ENCODE measurements at regions of chr20 and their contacts with region 1.

Region 1: GRCh38 chr20:63537525-63538203 is 488 bp upstream of the PTK6 start:
- DNase-seq: peak; percentile 99
- H3K4me3 Mint-ChIP-seq: peak overlapping the region; percentile 73
- H3K27ac Mint-ChIP-seq: peak overlapping the region; percentile 92
- H3K4me1 Mint-ChIP-seq: peaks cover 14% of the 10 kb centered on the region
- H3K27me3 Mint-ChIP-seq: no peaks in the 10 kb centered on the region
- CTCF ChIP-seq: peak; percentile 95

Region 2: GRCh38 chr20:63495741-63496595 is 41.7 kb before region 1 on chr20:
- CTCF ChIA-PET with region 1: interaction called, 10 read pairs
- POLR2A ChIA-PET with region 1: interaction called, 4 read pairs
- intact Hi-C with region 1: no loop called
- DNase-seq: peak; percentile 67
- H3K4me3 Mint-ChIP-seq: peak overlapping the region; percentile 23
- H3K27ac Mint-ChIP-seq: no peak overlapping the region
- H3K4me1 Mint-ChIP-seq: no peaks in the 10 kb centered on the region
- H3K27me3 Mint-ChIP-seq: no peaks in the 10 kb centered on the region
- CTCF ChIP-seq: peak; percentile 90

Region 3: GRCh38 chr20:63641792-63642544 is 104.3 kb after region 1 on chr20:
- CTCF ChIA-PET with region 1: interaction called, 4 read pairs
- POLR2A ChIA-PET with region 1: interaction called, 7 read pairs
- intact Hi-C with region 1: loop called (anchors 10 kb)
- DNase-seq: peak; percentile 82
- H3K4me3 Mint-ChIP-seq: peak overlapping the region; percentile 74
- H3K27ac Mint-ChIP-seq: no peak overlapping the region
- H3K4me1 Mint-ChIP-seq: peaks cover 6% of the 10 kb centered on the region
- H3K27me3 Mint-ChIP-seq: no peaks in the 10 kb centered on the region
- CTCF ChIP-seq: peak; percentile 39

Region 4: DNA sequence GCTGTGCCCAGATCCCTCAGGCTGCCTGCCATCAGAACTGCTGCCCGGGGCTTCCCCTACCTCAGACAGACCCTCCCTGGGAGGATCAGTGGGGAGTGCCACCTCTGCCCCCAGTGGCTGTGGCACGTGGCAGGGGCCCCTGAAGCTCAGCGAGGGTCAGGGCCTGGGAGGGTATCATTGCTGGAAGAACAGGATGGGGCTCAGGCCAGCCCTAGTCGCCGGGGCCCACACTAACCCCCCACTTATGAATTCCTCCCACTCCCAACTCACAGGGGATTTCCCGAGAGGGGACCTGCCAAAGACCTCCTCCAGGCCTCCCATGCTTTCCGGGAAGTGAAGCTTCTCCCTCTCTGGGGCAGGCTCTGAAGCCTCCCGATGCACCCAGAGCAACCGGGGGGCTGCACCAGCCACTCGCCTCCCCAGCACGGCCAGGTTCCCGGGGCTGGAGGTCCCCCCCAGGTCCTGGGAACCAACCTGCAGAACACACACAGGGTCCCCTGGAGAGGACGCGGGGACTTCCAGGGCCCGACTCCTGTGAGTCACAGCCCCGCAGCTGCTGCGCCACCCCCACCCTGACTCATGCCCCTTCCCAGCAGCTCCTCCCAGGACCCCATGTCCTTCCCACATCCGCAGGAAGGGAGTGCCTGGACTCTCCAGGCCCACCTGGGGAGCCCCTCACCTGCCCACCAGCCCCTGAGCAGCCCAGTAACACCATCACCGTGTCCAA is 161.2 kb after region 1 on chr20:
- CTCF ChIA-PET with region 1: interaction called, 6 read pairs
- POLR2A ChIA-PET with region 1: interaction called, 23 read pairs
- intact Hi-C with region 1: loop called (anchors 5 kb)
- DNase-seq: peak; percentile 94
- H3K4me3 Mint-ChIP-seq: peak overlapping the region; percentile 72
- H3K27ac Mint-ChIP-seq: peak overlapping the region; percentile 75
- H3K4me1 Mint-ChIP-seq: peaks cover 17% of the 10 kb centered on the region
- H3K27me3 Mint-ChIP-seq: no peaks in the 10 kb centered on the region
- CTCF ChIP-seq: no peak

Region 5: DNA sequence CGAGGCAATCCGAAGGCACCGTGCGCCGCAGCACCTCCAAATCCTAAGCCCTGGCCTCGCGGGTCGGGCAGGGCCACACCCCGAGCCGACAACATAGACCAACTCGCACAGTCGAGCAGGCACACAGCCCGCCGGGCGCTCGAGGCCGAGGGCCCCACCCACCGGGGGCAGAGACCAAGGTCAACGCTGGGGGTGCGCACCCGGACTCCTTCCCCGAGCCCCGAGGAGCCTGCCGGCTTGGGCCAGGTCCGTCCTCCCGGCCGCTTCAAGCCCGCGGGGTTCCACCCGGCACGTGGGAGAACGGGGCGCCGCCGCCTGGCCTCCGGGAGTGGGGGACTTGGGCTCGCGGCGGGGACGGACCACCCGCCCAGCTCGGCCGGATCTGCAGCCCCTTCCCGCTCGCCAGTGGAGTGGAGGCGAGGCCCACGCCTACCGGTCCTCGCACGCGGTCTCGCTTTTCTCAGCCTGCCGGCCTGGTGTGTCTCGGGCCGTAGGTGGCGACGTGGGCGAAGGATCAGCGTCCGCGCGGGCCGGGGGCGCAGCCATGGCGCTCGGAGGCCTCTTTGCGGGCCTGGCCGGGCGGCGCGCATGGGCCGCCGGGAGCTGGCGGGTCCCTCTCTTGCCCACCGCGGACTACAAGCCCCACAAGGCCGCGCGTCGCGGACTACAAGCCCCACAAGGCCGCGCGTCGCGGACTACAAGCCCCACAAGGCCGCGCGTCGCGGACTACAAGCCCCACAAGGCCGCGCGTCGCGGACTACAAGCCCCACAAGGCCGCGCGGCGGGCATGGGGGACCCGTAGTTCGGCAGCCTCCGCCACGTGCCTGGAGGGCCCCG is 418.4 kb after region 1 on chr20 and contains the start of gene UCKL1:
- CTCF ChIA-PET with region 1: interaction called, 7 read pairs
- POLR2A ChIA-PET with region 1: interaction called, 17 read pairs
- intact Hi-C with region 1: loop called (anchors 5 kb)
- DNase-seq: peak; percentile 81
- H3K4me3 Mint-ChIP-seq: peak within 1 kb of the TSS; percentile 74
- H3K27ac Mint-ChIP-seq: no peak within 1 kb of the TSS
- H3K4me1 Mint-ChIP-seq: peaks cover 21% of the 10 kb centered on the region
- H3K27me3 Mint-ChIP-seq: no peaks in the 10 kb centered on the region
- CTCF ChIP-seq: no peak
- total RNA-seq, gene UCKL1: 38.6 and 43.7 TPM in 2 replicates

Region 6: GRCh38 chr20:63980806-63981728 is 443.4 kb after region 1 on chr20 and contains the start of gene PRPF6:
- CTCF ChIA-PET with region 1: interaction called, 3 read pairs
- POLR2A ChIA-PET with region 1: interaction called, 30 read pairs
- intact Hi-C with region 1: no loop called
- DNase-seq: peak; percentile 96
- H3K4me3 Mint-ChIP-seq: peak within 1 kb of the TSS; percentile 79
- H3K27ac Mint-ChIP-seq: peak within 1 kb of the TSS; percentile 92
- H3K4me1 Mint-ChIP-seq: peaks cover 30% of the 10 kb centered on the region
- H3K27me3 Mint-ChIP-seq: no peaks in the 10 kb centered on the region
- CTCF ChIP-seq: peak; percentile 77
- total RNA-seq, gene PRPF6: 70.9 and 88.5 TPM in 2 replicates